Heart right ventricle (tissue), 16 donors: ENCODE measurements at regions of chr5 and their contacts with region 1.

Region 1: GRCh38 chr5:177592010-177592834 is at the start of gene TMED9:
- DNase-seq: peak; percentile 76 to 86
- ATAC-seq: peak; percentile 95 to 98 (median 98)
- H3K4me3 ChIP-seq: peak within 1 kb of the TSS; percentile 69 to 99 (median 95)
- H3K27ac ChIP-seq: peak within 1 kb of the TSS; percentile 31 to 94 (median 80)
- H3K4me1 ChIP-seq: peaks cover 0 to 22% (median 17%) of the 10 kb centered on the region in 9 donors
- H3K27me3 ChIP-seq: peaks cover 0 to 27% (median 15%) of the 10 kb centered on the region in 7 donors
- CTCF ChIP-seq: peak in 7 of 9 donors; percentile 6 to 44 (median 22)
- total RNA-seq, gene TMED9: 58.1 to 140 (median 69.5) TPM

Region 2: GRCh38 chr5:177303121-177303924 is 288.9 kb before region 1 on chr5 and contains the starts of genes PRELID1 and RAB24:
- intact Hi-C with region 1: no loop called
- DNase-seq: peak; percentile 88 to 91
- ATAC-seq: peak; percentile 82 to 93 (median 86)
- H3K4me3 ChIP-seq: peak within 1 kb of the TSS; percentile 67 to 100 (median 94)
- H3K27ac ChIP-seq: peak within 1 kb of the TSS; percentile 72 to 97 (median 89)
- H3K4me1 ChIP-seq: peaks cover 20 to 85% (median 52%) of the 10 kb centered on the region in 9 donors
- H3K27me3 ChIP-seq: no peaks in the 10 kb centered on the region
- CTCF ChIP-seq: peak in 8 of 9 donors; percentile 12 to 66 (median 35)
- total RNA-seq, gene PRELID1: 32.3 to 69.8 (median 36.2) TPM
- total RNA-seq, gene RAB24: 14.7 to 22.1 (median 19.3) TPM

Region 3: DNA sequence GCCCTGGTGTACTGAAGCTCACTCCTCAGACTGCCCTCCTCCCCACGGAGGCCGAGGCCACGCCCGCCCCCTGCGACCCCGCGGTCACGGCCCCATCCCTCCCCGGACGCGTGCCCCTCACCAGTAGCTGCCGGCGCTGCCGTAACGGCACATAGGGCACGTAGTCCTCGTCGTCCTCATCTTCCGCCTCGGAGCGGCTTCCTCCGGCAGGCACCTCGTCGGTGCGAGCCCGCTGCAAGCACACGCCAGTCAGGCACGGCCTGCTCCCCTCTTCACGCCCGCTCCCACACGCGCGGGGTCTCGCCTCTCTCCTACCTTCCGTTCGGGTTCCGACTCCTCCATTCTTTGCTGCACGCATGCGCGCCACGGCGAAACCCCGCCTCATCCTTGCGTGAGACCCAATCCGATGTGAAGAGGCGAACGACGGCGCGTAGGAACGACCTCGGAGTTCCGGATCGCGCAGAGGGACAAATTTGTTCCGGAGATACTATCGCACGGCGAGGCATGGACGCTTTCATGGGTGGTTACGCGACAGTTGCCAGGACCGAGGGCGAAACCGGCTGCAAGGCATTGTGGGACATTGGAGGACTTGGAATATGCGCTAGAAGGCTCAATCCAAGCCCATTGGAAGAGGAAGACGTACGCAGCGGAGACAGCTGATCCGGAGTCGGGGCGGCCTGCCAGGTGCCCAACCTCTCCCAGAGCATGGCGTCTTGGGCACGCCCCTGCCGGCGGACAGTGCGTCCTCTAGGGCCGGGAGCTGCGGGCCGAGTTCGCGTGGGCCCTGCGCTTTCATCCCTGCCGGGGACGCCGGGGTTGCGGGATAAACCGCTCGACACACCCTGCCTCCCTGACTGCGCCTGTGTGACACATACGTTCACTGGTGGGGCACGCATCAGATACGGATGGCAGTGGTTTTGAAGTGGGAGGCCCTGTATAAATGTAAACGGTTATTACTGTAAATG is 75.3 kb before region 1 on chr5 and contains the start of gene DDX41:
- intact Hi-C with region 1: loop called in 2 of 10 experiments (anchors 5 to 10 kb)
- DNase-seq: peak; percentile 96 to 98
- ATAC-seq: peak; percentile 89 to 97 (median 96)
- H3K4me3 ChIP-seq: peak within 1 kb of the TSS; percentile 58 to 100 (median 86)
- H3K27ac ChIP-seq: peak within 1 kb of the TSS; percentile 74 to 94 (median 90)
- H3K4me1 ChIP-seq: peaks cover 5 to 32% (median 18%) of the 10 kb centered on the region in 9 donors
- H3K27me3 ChIP-seq: no peaks in the 10 kb centered on the region
- CTCF ChIP-seq: peak in 4 of 9 donors; percentile 5 to 32 (median 20)
- total RNA-seq, gene DDX41: 19.7 to 53.2 (median 27.2) TPM

Region 4: DNA sequence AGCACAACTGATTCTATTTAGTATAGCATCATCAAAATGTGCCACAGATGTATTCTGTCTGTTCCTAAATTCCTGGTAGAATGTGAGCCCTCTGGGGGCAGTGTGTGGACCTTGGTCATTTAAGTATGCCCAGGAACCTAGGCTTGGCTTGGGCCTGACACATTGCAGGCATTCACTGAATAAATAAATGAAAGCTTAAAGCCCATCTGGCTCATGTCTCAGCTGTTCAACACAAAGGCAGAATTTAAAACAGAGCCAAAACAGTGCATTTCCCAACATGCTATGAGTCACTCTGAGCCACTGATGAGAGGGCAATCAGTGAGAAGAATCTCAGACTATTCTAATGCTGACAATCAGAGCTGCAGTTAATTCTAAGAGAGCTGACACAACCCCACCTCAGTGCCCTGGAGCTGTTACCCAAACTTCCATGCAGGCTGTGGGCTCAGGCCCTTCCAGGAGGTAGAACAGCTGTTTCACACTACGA is 45.9 kb before region 1 on chr5:
- intact Hi-C with region 1: loop called in 3 of 10 experiments (anchors 5 to 10 kb)
- DNase-seq: peak; percentile 28 to 39
- ATAC-seq: peak; percentile 63 to 80 (median 72)
- H3K4me3 ChIP-seq: no peak overlapping the region
- H3K27ac ChIP-seq: peak overlapping the region; percentile 2 to 88 (median 72)
- H3K4me1 ChIP-seq: peaks cover 6 to 86% (median 65%) of the 10 kb centered on the region in 9 donors
- H3K27me3 ChIP-seq: no peaks in the 10 kb centered on the region
- CTCF ChIP-seq: no peak

Region 5: GRCh38 chr5:177554474-177555111 is 37.6 kb before region 1 on chr5 and contains the start of gene FAM193B:
- intact Hi-C with region 1: loop called in 3 of 10 experiments (anchors 5 to 10 kb)
- DNase-seq: peak; percentile 93 to 95
- ATAC-seq: peak; percentile 93 to 98 (median 96)
- H3K4me3 ChIP-seq: peak within 1 kb of the TSS; percentile 68 to 99 (median 96)
- H3K27ac ChIP-seq: peak within 1 kb of the TSS; percentile 75 to 90 (median 86)
- H3K4me1 ChIP-seq: peaks cover 9 to 48% (median 29%) of the 10 kb centered on the region in 9 donors
- H3K27me3 ChIP-seq: no peaks in the 10 kb centered on the region
- CTCF ChIP-seq: peak in 6 of 9 donors; percentile 11 to 36 (median 24)
- total RNA-seq, gene FAM193B: 14.1 to 34.4 (median 20.1) TPM